ENCODE measurements at regions of chr3 and their contacts with region 1.

Region 1: DNA sequence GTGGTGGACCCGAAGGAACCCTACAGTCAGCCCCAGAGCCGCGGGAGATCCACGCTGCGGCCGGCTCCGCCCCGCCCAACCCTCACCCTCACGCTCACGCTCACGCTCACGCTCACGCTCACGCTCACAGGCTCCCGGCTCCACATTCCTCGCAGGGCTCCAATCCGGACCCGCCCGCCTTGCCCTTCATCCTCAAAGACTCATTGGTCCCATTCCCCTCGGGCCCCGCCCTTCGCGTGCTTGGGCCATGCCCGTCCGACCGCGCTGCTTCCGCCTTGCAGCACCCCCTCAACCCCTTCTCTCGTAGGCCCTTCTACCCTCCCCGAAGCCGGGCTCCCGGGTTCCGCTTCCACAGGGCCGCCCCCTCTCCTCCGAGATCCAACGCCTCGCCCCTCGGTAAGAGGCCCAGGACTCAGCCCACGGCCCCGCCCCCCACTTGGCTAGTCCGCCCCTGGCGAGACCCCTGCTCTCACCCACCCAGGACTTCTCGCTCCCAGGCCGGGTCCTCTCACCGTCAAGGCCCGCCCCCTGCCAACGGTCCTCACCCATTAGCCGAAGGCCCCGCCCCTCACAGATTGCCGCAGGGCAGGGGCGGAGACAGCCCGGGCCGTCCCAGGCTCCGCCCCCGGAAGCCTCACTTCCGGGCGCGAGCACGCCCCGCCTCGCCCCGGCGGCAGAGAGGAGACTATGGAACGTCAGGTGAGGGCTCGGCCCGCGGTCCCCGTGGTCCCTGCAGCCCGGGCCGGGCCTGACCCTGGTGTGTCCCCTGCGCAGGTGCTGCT is at the start of gene APEH:
- DNase-seq: peak; percentile 99
- CTCF ChIP-seq: no peak

Region 2: DNA sequence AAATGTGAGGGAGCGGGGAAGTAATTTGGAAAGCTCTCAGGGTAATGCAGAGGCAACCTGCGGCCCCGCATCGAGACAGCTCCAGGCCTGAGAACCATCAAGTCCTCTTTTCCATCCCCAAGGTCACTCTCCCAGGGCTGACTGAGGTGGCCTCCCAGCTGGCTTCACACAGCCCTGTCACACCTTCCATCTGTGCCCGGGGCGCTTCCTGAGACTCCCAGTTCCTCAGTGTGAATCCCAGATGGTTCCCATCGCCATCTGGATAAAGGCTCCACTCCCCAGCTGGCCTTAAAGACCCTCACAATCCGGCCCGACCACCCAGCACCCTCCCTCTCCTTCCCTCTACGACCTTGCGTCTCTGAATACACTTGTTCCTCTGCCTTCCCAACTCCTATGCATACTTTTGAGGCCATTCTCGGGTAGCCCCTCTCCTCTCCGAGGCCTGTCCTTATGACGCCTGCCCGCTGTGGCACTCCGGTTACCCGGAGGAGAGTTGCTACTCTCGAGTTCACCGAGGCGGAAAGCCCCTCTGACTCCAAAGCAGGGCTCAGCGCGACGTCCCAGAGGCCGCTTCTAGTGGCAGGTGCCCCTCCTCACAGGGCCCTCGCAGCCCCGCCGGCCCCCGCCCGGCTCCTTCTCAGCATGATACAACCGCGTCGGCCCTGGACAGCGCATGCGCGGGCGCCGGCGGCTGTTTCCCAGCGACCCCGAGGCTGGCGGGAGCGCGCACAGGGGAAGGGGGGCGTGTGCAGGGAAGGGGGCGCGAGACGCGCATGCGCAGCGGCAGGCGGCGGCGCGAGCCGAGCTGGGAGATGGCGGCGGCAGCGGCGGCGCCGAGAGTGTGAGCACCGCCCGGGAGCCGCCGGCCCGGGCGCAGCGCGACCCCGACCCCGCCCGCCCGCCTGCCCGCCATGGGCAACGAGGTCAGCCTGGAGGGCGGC is 119.9 kb before region 1 on chr3 and contains the start of gene BSN:
- CTCF ChIA-PET with region 1: interaction called, 15 read pairs
- POLR2A ChIA-PET with region 1: no interaction called
- DNase-seq: peak; percentile 99
- CTCF ChIP-seq: no peak

Region 3: GRCh38 chr3:49570028-49570654 is 103.8 kb before region 1 on chr3:
- CTCF ChIA-PET with region 1: interaction called, 10 read pairs
- POLR2A ChIA-PET with region 1: no interaction called
- DNase-seq: no peak
- CTCF ChIP-seq: no peak

Region 4: GRCh38 chr3:49856181-49857005 is 182.5 kb after region 1 on chr3 and contains the start of gene TRAIP:
- CTCF ChIA-PET with region 1: no interaction called
- POLR2A ChIA-PET with region 1: no interaction called
- DNase-seq: peak; percentile 100
- CTCF ChIP-seq: no peak

Measured in GM10248 (cell line).